Activated B cell treated with CpG ODN at 0.5 μM for 24 hours (primary cell): ENCODE measurements at regions of chr1 and their contacts with region 1.

Region 1: DNA sequence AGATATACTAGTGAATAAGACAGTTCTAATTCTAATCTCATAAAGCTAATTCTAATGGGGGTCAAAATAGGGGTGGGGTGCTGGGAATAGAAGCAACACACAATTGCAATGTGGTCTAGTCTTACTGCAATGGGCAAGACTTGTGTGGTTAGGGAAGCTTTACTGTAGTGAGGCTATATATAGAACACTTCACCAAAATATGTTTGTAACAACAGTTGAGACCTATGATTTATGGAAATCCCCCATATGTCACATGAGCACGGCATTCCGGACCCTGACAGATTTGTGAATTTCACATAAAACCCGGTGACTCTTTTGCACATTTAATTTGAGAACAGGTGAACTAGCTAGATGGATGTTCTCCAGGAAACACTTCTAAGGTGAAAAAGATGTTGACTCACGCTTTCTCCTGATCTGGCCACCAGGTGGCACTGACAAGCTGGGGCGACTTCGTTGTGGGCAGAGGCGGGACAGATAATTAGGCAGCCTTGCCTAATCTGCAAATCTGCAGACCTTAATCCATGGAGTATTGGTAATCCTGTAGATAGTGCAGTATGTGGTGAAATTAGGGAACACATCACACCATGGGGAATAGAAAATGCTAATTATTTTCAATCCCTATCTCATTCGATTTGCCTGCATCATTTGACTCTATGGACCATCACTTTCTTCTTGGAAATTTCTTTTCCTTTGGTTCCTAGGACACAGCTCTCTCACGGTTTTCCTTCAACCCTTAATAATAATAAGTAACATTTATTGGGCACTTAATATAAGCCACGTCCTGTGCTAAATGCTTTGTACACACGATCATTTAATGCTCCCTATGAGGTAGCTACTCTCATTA is 37.7 kb downstream of the KIAA0040 start:
- DNase-seq: peak; percentile 55
- ATAC-seq: peak; percentile 67
- H3K4me3 Mint-ChIP-seq: no peak overlapping the region
- H3K27ac Mint-ChIP-seq: no peak overlapping the region
- H3K4me1 Mint-ChIP-seq: peaks cover 28% of the 10 kb centered on the region
- H3K27me3 Mint-ChIP-seq: peaks cover 18% of the 10 kb centered on the region
- CTCF ChIP-seq: peak; percentile 70

Region 2: GRCh38 chr1:175033953-175034352 is 120.9 kb before region 1 on chr1:
- CTCF ChIA-PET with region 1: interaction called, 10 read pairs
- POLR2A ChIA-PET with region 1: no interaction called
- intact Hi-C with region 1: no loop called
- DNase-seq: no peak
- ATAC-seq: no peak
- H3K4me3 Mint-ChIP-seq: no peak overlapping the region
- H3K27ac Mint-ChIP-seq: no peak overlapping the region
- H3K4me1 Mint-ChIP-seq: peaks cover 9% of the 10 kb centered on the region
- H3K27me3 Mint-ChIP-seq: peaks cover 4% of the 10 kb centered on the region
- CTCF ChIP-seq: no peak

Region 3: DNA sequence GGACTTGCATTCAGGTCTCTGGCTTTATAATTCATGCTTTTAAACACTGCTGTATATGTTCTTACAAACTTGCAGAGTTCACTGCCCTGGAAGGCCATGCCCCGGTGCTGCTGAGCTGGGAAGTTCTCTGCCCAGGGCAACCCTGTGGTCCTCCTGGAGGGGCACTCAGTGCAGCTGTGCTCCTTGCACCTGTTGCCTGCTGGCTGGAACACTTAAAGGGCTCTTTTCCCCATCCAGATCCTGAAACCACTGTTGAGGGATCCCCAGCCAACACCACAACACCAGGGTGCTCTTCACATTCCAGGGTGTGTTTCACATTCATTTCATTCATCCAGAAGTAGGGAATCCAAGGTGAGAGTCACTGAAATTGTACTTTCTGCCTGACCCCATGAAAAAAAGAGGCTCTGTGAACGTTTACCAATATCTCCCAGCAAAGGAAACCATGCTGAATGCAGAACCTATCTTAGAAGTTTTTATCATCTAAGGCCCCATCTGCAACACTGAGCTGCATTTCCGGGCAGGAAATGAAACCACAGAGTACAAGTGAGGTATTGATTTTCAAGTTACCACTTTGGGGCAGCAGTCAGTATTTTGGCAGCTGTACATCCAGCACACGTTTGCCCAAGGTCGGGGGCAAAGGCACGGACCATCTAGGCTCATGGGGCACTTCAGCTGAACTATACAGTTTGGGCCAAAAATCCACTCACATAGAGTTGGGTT is 54.1 kb after region 1 on chr1:
- CTCF ChIA-PET with region 1: interaction called, 20 read pairs
- POLR2A ChIA-PET with region 1: no interaction called
- intact Hi-C with region 1: no loop called
- DNase-seq: no peak
- ATAC-seq: peak; percentile 84
- H3K4me3 Mint-ChIP-seq: peak overlapping the region; percentile 80
- H3K27ac Mint-ChIP-seq: peak overlapping the region; percentile 98
- H3K4me1 Mint-ChIP-seq: peaks cover 64% of the 10 kb centered on the region
- H3K27me3 Mint-ChIP-seq: no peaks in the 10 kb centered on the region
- CTCF ChIP-seq: no peak

Region 4: GRCh38 chr1:175253225-175253624 is 98.4 kb after region 1 on chr1:
- CTCF ChIA-PET with region 1: no interaction called
- POLR2A ChIA-PET with region 1: no interaction called
- intact Hi-C with region 1: no loop called
- DNase-seq: no peak
- ATAC-seq: no peak
- H3K4me3 Mint-ChIP-seq: no peak overlapping the region
- H3K27ac Mint-ChIP-seq: no peak overlapping the region
- H3K4me1 Mint-ChIP-seq: peaks cover 6% of the 10 kb centered on the region
- H3K27me3 Mint-ChIP-seq: no peaks in the 10 kb centered on the region
- CTCF ChIP-seq: no peak

Region 5: GRCh38 chr1:175319418-175320230 is 164.8 kb after region 1 on chr1:
- CTCF ChIA-PET with region 1: interaction called, 303 read pairs
- POLR2A ChIA-PET with region 1: interaction called, 17 read pairs
- intact Hi-C with region 1: loop called (anchors 1 kb)
- DNase-seq: peak; percentile 50
- ATAC-seq: peak; percentile 87
- H3K4me3 Mint-ChIP-seq: peak overlapping the region; percentile 76
- H3K27ac Mint-ChIP-seq: peak overlapping the region; percentile 42
- H3K4me1 Mint-ChIP-seq: peaks cover 29% of the 10 kb centered on the region
- H3K27me3 Mint-ChIP-seq: no peaks in the 10 kb centered on the region
- CTCF ChIP-seq: no peak

Region 6: DNA sequence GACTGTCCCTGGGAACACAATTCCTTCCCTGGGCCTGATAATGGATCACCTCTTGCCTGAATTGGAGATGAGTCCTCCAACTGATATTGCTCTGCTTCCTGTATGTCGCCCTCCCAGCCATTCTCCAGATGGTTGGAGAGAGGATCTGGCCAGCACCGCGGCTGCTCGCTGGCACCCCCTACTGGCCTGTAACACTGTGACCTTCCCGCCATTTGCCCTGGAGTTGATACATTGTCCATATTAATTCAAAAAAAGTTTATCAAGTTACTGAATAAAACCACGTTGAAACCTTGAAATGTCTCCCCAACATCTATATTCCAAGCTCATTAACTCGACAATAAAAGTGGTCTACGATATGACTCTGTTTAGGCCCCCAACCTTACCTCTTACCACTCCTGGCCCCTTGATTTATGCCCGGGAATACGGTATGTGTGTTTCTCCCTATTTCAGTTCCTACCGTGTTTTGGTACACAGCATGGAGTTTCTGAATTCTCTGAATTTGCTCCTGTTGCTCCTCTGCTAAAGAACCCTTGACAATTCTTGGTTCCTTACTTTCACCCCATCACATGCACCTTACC is 279.5 kb after region 1 on chr1:
- CTCF ChIA-PET with region 1: interaction called, 9 read pairs
- POLR2A ChIA-PET with region 1: no interaction called
- intact Hi-C with region 1: loop called (anchors 1 kb)
- DNase-seq: no peak
- ATAC-seq: no peak
- H3K4me3 Mint-ChIP-seq: no peak overlapping the region
- H3K27ac Mint-ChIP-seq: no peak overlapping the region
- H3K4me1 Mint-ChIP-seq: no peaks in the 10 kb centered on the region
- H3K27me3 Mint-ChIP-seq: peaks cover 20% of the 10 kb centered on the region
- CTCF ChIP-seq: no peak

Region 7: DNA sequence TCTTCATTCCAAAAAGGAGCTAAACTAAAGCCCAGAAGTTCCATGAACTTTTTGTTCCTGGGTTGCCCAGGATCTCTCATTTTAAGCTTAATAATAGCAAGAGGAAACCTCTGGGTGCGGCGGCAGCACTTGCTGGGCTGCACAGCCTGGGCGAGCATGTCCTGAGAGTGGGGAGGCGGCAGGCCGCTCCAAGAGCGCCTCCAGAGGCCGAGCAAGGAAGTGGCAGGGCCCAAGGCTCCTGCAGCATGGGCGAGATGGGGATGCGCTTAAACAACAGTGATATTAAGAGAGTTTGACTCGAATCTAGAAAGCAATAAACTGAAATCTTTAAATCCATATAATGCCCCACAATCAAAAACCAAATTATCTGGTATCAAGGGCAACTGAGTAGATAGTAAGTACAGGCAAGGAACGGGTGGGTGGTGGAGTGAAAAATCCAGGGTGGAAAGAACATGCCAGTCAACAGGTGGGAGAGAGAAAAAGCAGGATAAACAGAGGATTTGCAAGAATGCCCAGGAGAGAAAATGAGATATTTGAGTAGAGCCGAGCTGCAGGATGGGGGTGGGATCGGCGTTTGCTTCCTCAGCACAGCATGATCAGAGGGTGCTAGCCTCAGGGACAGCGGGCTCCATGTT is 602.6 kb after region 1 on chr1:
- CTCF ChIA-PET with region 1: interaction called, 3 read pairs
- POLR2A ChIA-PET with region 1: no interaction called
- intact Hi-C with region 1: loop called (anchors 5 kb)
- DNase-seq: no peak
- ATAC-seq: peak; percentile 52
- H3K4me3 Mint-ChIP-seq: no peak overlapping the region
- H3K27ac Mint-ChIP-seq: no peak overlapping the region
- H3K4me1 Mint-ChIP-seq: no peaks in the 10 kb centered on the region
- H3K27me3 Mint-ChIP-seq: peaks cover 4% of the 10 kb centered on the region
- CTCF ChIP-seq: no peak

Region 8: GRCh38 chr1:176374967-176375569 is 1220.2 kb after region 1 on chr1:
- CTCF ChIA-PET with region 1: no interaction called
- POLR2A ChIA-PET with region 1: no interaction called
- intact Hi-C with region 1: loop called (anchors 5 kb)
- DNase-seq: peak; percentile 22
- ATAC-seq: peak; percentile 49
- H3K4me3 Mint-ChIP-seq: no peak overlapping the region
- H3K27ac Mint-ChIP-seq: no peak overlapping the region
- H3K4me1 Mint-ChIP-seq: no peaks in the 10 kb centered on the region
- H3K27me3 Mint-ChIP-seq: peaks cover 6% of the 10 kb centered on the region
- CTCF ChIP-seq: no peak